ENCODE measurements at regions of chr6 and their contacts with region 1.

Region 1: DNA sequence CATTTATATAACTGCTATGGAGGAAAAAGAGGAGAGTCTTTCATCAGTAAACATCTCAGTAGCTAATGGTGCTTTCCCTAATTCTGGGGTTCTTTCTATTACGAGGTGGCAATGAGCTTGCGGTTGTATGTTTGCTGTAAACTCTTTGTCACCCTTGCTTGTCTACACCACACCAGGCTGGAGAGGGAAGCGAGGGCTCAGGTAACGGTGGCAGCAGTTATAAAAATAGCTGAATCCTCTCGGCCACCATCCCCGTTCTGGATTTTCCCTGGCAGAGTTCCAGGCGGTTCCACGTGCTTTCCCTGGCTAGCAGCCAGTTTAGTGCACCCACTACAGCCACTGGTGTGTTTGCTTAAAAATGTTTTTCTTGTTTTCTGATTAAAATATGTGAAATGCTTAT is 39.0 kb downstream of the MAS1 start:
- DNase-seq: peak; percentile 49
- H3K4me3 Mint-ChIP-seq: no peak overlapping the region
- H3K27ac Mint-ChIP-seq: no peak overlapping the region
- H3K4me1 Mint-ChIP-seq: peaks cover 31% of the 10 kb centered on the region
- H3K27me3 Mint-ChIP-seq: peaks cover 3% of the 10 kb centered on the region

Region 2: GRCh38 chr6:159056003-159056402 is 873.8 kb before region 1 on chr6:
- CTCF ChIA-PET with region 1: no interaction called
- intact Hi-C with region 1: loop called (anchors 2 kb)
- DNase-seq: peak; percentile 41
- H3K4me3 Mint-ChIP-seq: peak overlapping the region; percentile 22
- H3K27ac Mint-ChIP-seq: peak overlapping the region; percentile 91
- H3K4me1 Mint-ChIP-seq: peaks cover 60% of the 10 kb centered on the region
- H3K27me3 Mint-ChIP-seq: no peaks in the 10 kb centered on the region

Region 3: GRCh38 chr6:159679091-159680077 is 250.4 kb before region 1 on chr6:
- CTCF ChIA-PET with region 1: no interaction called
- intact Hi-C with region 1: loop called (anchors 1 kb)
- DNase-seq: peak; percentile 69
- H3K4me3 Mint-ChIP-seq: peak overlapping the region; percentile 11
- H3K27ac Mint-ChIP-seq: peak overlapping the region; percentile 88
- H3K4me1 Mint-ChIP-seq: peaks cover 39% of the 10 kb centered on the region
- H3K27me3 Mint-ChIP-seq: no peaks in the 10 kb centered on the region

Region 4: GRCh38 chr6:159789377-159790148 is 140.3 kb before region 1 on chr6 and contains the start of gene TCP1:
- CTCF ChIA-PET with region 1: no interaction called
- intact Hi-C with region 1: loop called (anchors 1 kb)
- DNase-seq: peak; percentile 100
- H3K4me3 Mint-ChIP-seq: peak within 1 kb of the TSS; percentile 99
- H3K27ac Mint-ChIP-seq: peak within 1 kb of the TSS; percentile 98
- H3K4me1 Mint-ChIP-seq: peaks cover 66% of the 10 kb centered on the region
- H3K27me3 Mint-ChIP-seq: no peaks in the 10 kb centered on the region
- total RNA-seq, gene TCP1: 420 to 425 TPM

Region 5: DNA sequence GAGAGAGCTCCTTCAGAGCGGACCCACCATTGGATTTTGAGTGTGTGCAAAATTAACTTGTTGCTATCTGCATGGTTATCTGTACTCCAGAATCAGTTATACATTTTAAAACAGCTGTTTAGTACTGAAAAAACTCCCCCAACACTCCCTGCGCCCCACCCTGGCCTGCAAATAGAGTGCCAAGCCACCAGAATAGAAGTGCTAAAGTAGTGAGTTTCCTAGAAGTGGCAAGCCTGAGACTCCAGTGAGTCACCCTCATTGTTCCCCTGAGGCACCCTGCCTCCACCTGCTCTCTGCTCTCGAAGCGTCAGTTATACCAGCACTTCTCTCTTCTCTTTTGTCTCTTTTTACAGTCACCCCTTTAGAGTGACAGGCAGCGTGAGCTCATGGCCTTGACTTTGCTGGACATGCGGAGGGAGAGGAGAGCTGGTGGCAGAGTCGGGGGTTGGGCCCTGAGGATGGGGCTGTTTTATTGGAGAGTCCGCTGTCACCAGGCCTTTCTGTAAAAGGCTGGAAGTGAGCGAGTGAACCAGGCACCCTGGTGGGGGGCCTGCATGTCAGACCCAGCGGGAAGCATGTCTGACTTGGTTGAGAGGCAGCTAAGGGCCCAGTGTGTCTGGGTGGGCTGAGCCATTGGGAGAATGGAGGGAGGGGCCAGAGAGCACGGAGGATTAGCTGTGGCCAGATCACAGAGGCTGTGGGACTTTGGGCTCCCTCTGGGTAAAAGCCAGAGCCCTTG is 49.5 kb after region 1 on chr6:
- CTCF ChIA-PET with region 1: no interaction called
- intact Hi-C with region 1: loop called (anchors 1 kb)
- DNase-seq: peak; percentile 87
- H3K4me3 Mint-ChIP-seq: peak overlapping the region; percentile 65
- H3K27ac Mint-ChIP-seq: peak overlapping the region; percentile 98
- H3K4me1 Mint-ChIP-seq: peaks cover 92% of the 10 kb centered on the region
- H3K27me3 Mint-ChIP-seq: no peaks in the 10 kb centered on the region

Region 6: GRCh38 chr6:160520043-160520904 is 590.5 kb after region 1 on chr6:
- CTCF ChIA-PET with region 1: no interaction called
- intact Hi-C with region 1: loop called (anchors 1 kb)
- DNase-seq: peak; percentile 45
- H3K4me3 Mint-ChIP-seq: peak overlapping the region; percentile 88
- H3K27ac Mint-ChIP-seq: peak overlapping the region; percentile 80
- H3K4me1 Mint-ChIP-seq: peaks cover 17% of the 10 kb centered on the region
- H3K27me3 Mint-ChIP-seq: no peaks in the 10 kb centered on the region